PC-3 (cell line): ENCODE measurements at regions of chr10 and their contacts with region 1.

Region 1: GRCh38 chr10:34655286-34656170 is 159.6 kb downstream of the PARD3 start:
- DNase-seq: peak; percentile 100
- ATAC-seq: peak; percentile 78
- H3K4me3 ChIP-seq: no peak overlapping the region
- H3K27ac ChIP-seq: no peak overlapping the region
- H3K4me1 ChIP-seq: peaks cover 9% of the 10 kb centered on the region; the same call in 1 of the 2 replicates
- H3K27me3 ChIP-seq: no peaks in the 10 kb centered on the region
- CTCF ChIP-seq: peak; percentile 100

Region 2: DNA sequence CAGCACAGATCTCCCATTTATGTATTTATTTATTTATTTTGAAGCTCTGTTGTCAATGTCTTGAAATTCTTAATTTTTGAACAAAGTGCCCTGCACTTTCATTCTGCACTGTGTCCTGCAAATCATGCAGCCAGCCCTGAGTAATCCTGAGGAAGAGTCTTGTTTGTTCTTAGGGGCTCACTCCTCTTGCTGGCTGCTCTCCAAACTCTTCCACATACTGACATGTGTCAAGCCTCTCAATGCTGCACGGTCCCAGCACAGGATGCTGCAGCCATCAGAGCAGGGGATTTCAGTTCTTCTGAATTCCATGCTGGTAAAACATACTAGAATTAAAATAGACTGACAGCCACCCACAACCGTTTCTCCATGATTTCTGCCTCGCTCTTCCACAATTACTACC is 47.6 kb before region 1 on chr10:
- CTCF ChIA-PET with region 1: no interaction called
- POLR2A ChIA-PET with region 1: no interaction called
- intact Hi-C with region 1: no loop called
- DNase-seq: peak; percentile 76
- ATAC-seq: peak; percentile 84
- H3K4me3 ChIP-seq: no peak overlapping the region
- H3K27ac ChIP-seq: no peak overlapping the region
- H3K4me1 ChIP-seq: peaks cover 14% of the 10 kb centered on the region
- H3K27me3 ChIP-seq: no peaks in the 10 kb centered on the region
- CTCF ChIP-seq: no peak

Region 3: GRCh38 chr10:34960983-34961382 is 305.5 kb after region 1 on chr10:
- CTCF ChIA-PET with region 1: interaction called, 4 read pairs
- POLR2A ChIA-PET with region 1: no interaction called
- intact Hi-C with region 1: loop called (anchors 1 kb)
- DNase-seq: peak; percentile 66
- ATAC-seq: peak; percentile 83
- H3K4me3 ChIP-seq: no peak overlapping the region
- H3K27ac ChIP-seq: no peak overlapping the region
- H3K4me1 ChIP-seq: 0 out of 2 replicates have a peak, but pooled peaks cover 3% of the 10 kb centered on the region
- H3K27me3 ChIP-seq: no peaks in the 10 kb centered on the region
- CTCF ChIP-seq: peak; percentile 79

Region 4: DNA sequence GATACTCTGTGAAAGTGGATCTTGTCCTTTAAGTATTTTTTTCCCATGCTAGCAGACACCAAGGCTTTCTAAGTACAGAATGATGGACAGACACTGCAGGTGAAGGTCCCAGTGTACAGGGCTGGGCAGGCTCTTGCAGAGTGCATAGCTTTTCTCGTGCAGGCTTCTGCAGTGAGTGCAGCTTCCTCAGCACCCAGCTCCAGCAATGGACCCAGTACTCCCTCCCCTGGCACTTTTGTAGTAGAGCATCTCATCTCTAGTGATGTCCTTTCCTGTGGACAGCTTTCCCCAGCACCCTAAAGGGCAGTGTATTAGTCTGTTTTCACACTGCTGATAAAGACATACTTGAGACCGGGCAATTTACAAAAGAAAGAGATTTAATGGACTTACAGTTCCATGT is 330.3 kb after region 1 on chr10:
- CTCF ChIA-PET with region 1: interaction called, 9 read pairs
- POLR2A ChIA-PET with region 1: no interaction called
- intact Hi-C with region 1: loop called (anchors 1 kb)
- DNase-seq: peak; percentile 87
- ATAC-seq: peak; percentile 96
- H3K4me3 ChIP-seq: no peak overlapping the region
- H3K27ac ChIP-seq: no peak overlapping the region
- H3K4me1 ChIP-seq: no peaks in the 10 kb centered on the region
- H3K27me3 ChIP-seq: no peaks in the 10 kb centered on the region
- CTCF ChIP-seq: peak; percentile 93